CD14-positive monocyte (primary cell): ENCODE measurements at regions of chr14 and their contacts with region 1.

Region 1: DNA sequence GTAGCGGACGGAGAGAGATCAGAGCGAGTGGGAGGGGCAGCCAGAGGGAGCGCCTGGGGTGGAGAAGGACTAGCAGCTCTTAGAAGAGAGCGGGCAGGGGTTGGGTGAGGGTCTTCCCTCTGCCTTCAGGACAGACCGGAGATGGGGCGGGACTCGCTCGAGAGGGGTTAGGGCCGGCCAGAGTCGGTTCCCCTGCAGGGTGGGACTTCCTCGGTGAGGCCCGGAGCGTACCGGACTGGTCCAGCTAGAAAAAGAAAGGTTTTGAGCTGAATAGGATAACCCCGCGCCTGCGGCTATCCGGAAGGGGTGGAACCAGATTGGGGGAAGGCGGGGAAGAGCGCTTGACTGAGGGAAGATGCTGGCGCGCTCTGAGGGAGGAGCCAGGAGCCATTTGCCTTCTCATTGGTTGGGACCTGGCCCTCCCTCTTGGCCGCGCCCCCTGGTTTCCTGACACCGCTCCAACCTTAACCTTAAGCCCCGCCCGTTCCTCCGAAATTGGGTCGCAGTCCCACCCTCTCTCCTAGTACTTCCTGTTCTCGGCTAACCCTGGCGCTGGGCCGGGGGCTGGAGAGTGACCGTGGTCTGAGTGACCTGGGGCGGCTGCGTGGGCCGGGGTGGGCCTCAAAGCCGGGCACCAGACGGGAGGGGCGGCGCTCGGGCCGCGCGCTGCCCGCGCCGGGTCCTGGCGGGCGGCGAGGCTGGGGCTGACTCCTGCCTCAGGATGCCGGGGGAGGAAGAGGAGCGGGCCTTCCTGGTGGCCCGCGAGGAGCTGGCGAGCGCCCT is at the start of gene RNF31:
- DNase-seq: peak; percentile 97 to 99 (median 98)
- H3K4me3 ChIP-seq: peak within 1 kb of the TSS; percentile 84 to 100 (median 89)
- H3K4me3 Mint-ChIP-seq: peak within 1 kb of the TSS; percentile 98 to 99
- H3K27ac ChIP-seq: peak within 1 kb of the TSS; percentile 84 to 89
- H3K27ac Mint-ChIP-seq: peak within 1 kb of the TSS; percentile 95 to 99 (median 97)
- H3K4me1 ChIP-seq: peaks cover 28 to 41% of the 10 kb centered on the region in 2 donors
- H3K4me1 Mint-ChIP-seq: peaks cover 41% of the 10 kb centered on the region
- H3K27me3 ChIP-seq: no peaks in the 10 kb centered on the region
- H3K27me3 Mint-ChIP-seq: peaks cover 0 to 2% (median 0%) of the 10 kb centered on the region in 3 donors
- CTCF ChIP-seq: no peak
- polyA plus RNA-seq, gene RNF31: 30.7 to 63.2 (median 36.8) TPM

Region 2: DNA sequence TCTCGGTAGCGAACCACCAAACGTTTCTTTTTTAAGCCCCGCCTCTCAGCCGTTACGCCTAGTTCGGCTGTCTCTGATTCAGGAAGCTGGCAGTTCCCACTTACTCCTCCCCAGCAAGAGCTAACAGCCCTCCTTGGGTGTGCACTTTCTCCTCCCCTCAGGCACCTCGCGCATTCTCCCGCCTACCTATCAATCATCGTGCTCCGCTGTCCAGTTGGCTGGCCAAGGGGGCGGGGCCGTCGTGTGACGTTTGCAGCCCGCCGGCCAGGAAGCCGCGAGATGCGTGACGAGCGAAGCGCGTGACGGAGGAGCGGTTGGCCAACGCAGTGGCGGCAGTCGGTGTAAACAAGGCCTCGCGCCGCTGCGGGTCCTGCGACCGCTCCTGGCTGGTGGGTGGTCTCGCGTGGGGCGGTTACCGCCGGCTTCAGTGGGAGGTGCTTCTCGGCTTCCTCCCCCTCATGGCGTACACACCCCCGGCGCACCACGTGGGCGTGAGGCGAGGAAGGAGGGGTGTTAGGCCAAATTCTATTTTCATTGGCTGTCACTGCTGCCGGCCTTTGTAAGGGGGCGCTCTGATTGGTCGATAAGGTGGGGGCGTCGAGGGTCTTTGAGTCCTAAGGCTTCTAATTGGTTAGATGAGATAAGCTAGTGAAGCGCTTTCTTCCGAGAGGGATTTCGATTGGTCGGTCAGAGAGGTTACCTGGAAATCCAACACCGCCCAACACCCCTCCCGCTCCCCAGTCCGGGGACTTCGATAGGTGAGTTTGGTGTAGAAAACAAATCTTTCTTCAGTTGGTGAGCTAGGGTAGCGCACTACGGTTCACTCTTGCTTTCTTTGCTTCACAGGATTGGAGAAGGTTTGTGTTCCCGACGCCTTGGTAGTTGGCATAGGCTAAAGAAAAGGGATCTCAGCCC is 32.4 kb before region 1 on chr14 and contains the starts of genes DCAF11 and NRL:
- intact Hi-C with region 1: loop called in 1 of 2 experiments (anchors 1 kb)
- DNase-seq: peak; percentile 100
- H3K4me3 ChIP-seq: peak within 1 kb of the TSS; percentile 87 to 90 (median 89)
- H3K4me3 Mint-ChIP-seq: peak within 1 kb of the TSS; percentile 89 to 95
- H3K27ac ChIP-seq: peak within 1 kb of the TSS; percentile 99 to 100
- H3K27ac Mint-ChIP-seq: peak within 1 kb of the TSS; percentile 98 to 99 (median 99)
- H3K4me1 ChIP-seq: peaks cover 19 to 27% of the 10 kb centered on the region in 2 donors
- H3K4me1 Mint-ChIP-seq: peaks cover 18% of the 10 kb centered on the region
- H3K27me3 ChIP-seq: no peaks in the 10 kb centered on the region
- H3K27me3 Mint-ChIP-seq: peaks cover 0 to 6% (median 2%) of the 10 kb centered on the region in 3 donors
- CTCF ChIP-seq: no peak
- polyA plus RNA-seq, gene DCAF11: 45.6 to 56.6 (median 48.8) TPM
- polyA plus RNA-seq, gene NRL: 1.1 to 1.5 (median 1.3) TPM

Region 3: GRCh38 chr14:24160850-24161804 is 14.0 kb after region 1 on chr14 and contains the start of gene IRF9:
- intact Hi-C with region 1: loop called in 1 of 2 experiments (anchors 2 kb)
- DNase-seq: peak; percentile 95 to 96 (median 95)
- H3K4me3 ChIP-seq: peak within 1 kb of the TSS; percentile 91 to 100 (median 96)
- H3K4me3 Mint-ChIP-seq: peak within 1 kb of the TSS; percentile 95 to 99
- H3K27ac ChIP-seq: peak within 1 kb of the TSS; percentile 76 to 100
- H3K27ac Mint-ChIP-seq: peak within 1 kb of the TSS; percentile 96 to 99 (median 97)
- H3K4me1 ChIP-seq: peaks cover 41 to 65% of the 10 kb centered on the region in 2 donors
- H3K4me1 Mint-ChIP-seq: peaks cover 52% of the 10 kb centered on the region
- H3K27me3 ChIP-seq: no peaks in the 10 kb centered on the region
- H3K27me3 Mint-ChIP-seq: no peaks in the 10 kb centered on the region
- CTCF ChIP-seq: peak; percentile 86
- polyA plus RNA-seq, gene IRF9: 44.7 to 208 (median 56.0) TPM